AG04450 (cell line): ENCODE measurements at regions of chr15 and their contacts with region 1.

Region 1: DNA sequence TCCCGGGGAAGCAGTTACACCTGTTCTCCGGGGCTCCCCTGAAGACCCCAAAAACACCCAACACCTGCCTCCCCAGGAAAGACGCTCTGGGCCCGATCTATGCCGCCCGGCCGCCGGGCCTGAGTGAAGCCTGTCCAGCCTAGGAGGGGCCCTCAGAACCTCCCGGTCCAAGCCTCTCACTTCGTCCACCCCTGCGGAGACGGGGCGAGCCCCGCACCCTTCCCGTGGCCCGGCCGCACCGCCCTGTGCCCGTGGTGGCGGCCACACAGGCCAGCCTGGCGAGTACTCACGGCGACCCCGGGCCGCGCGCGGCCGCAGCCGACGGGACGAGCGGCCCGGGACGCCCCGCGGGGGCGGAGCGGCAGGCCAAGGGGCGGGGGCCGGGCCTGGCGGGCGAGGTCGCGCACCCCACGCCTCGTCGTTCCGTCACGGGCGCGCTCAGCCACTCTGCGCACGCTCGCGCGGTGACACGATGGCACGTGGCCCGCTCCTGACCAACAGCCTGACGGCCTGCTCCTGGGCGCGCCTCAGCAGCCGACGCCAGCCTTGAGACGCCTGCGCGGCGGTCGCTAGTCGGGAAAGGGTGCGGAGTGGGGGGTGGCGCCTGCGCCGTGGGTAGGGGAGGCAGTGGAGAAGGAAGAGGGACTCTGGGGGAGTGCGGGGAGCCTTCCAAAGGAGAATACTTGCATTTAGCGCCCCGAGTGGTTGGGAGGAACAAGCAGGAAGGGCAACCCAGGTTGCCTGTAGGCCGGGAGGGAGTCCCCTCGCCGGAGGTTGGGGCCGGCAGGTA is at the start of gene PARP6:
- DNase-seq: peak; percentile 94
- H3K4me3 ChIP-seq: peak within 1 kb of the TSS; percentile 82
- H3K27ac ChIP-seq: peak within 1 kb of the TSS; percentile 77
- H3K27me3 ChIP-seq: peaks cover 2% of the 10 kb centered on the region
- CTCF ChIP-seq: peak; percentile 61
- polyA plus RNA-seq, gene PARP6: 56.1 and 57.8 TPM in 2 replicates

Region 2: GRCh38 chr15:72252663-72253299 is 19.6 kb before region 1 on chr15:
- CTCF ChIA-PET with region 1: no interaction called
- POLR2A ChIA-PET with region 1: no interaction called
- DNase-seq: no peak
- H3K4me3 ChIP-seq: no peak overlapping the region
- H3K27ac ChIP-seq: no peak overlapping the region
- H3K27me3 ChIP-seq: no peaks in the 10 kb centered on the region
- CTCF ChIP-seq: no peak

Region 3: DNA sequence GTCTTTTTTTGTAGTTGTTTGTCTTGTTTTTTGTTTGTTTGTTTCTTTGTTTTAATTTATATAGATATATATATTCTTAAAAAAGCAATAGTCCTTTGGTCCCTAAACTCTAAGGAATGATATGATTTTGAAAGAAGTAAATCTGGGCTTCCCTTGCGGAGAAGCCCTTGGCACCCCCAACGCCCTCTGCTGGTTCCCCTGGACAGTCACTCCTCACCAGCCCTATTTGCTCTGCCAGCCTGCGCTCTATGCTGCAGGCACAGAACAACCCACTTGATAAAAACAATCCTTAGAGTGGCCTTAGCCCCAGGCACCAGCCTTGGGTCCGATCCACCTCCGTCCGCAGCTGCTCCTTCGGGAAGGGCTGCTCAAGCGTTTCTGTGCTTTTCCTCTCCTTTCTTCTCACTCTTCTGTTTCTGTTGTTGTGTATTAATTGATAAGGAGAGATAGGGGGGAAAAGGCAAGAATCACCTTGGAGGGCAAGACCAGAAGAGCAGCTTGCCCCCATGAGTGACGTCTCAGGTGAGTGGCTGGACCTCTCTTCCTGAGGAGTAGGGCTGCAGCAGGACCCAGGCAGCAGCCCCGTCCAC is 13.6 kb after region 1 on chr15:
- CTCF ChIA-PET with region 1: interaction called, 13 read pairs
- POLR2A ChIA-PET with region 1: no interaction called
- DNase-seq: no peak
- H3K4me3 ChIP-seq: no peak overlapping the region
- H3K27ac ChIP-seq: no peak overlapping the region
- H3K27me3 ChIP-seq: peaks cover 6% of the 10 kb centered on the region
- CTCF ChIP-seq: peak; percentile 59